Caco-2 (cell line): ENCODE measurements at regions of chr17 and their contacts with region 1.

Region 1: DNA sequence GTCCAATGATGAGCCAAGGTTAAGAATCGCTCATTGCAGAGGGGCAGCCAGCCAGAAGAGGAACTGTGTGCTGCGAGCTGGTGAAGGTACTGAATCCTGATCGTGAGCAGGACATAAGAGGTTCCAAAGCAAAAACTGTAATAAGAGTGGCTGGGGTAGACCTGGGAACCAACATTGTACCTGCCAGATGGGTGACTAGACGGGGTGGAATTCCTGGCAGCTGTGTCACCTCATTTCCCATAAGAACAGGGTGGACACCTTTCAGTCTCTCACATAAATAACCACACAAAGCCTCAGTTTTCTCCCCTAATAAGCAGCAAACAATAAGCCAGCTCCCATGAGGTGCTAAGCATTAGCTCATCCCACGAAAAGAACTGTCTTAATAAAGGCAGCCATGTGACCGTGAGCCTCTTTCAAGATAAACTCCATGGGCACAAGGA is 290.3 kb downstream of the SOX9 start:
- DNase-seq: no peak
- H3K4me3 ChIP-seq: no peak overlapping the region
- H3K4me3 Mint-ChIP-seq: no peak overlapping the region
- H3K27ac Mint-ChIP-seq: peak overlapping the region; percentile 77
- H3K4me1 ChIP-seq: peaks cover 79% of the 10 kb centered on the region
- H3K4me1 Mint-ChIP-seq: peaks cover 50% of the 10 kb centered on the region
- H3K27me3 ChIP-seq: no peaks in the 10 kb centered on the region
- H3K27me3 Mint-ChIP-seq: no peaks in the 10 kb centered on the region
- CTCF ChIP-seq: no peak

Region 2: DNA sequence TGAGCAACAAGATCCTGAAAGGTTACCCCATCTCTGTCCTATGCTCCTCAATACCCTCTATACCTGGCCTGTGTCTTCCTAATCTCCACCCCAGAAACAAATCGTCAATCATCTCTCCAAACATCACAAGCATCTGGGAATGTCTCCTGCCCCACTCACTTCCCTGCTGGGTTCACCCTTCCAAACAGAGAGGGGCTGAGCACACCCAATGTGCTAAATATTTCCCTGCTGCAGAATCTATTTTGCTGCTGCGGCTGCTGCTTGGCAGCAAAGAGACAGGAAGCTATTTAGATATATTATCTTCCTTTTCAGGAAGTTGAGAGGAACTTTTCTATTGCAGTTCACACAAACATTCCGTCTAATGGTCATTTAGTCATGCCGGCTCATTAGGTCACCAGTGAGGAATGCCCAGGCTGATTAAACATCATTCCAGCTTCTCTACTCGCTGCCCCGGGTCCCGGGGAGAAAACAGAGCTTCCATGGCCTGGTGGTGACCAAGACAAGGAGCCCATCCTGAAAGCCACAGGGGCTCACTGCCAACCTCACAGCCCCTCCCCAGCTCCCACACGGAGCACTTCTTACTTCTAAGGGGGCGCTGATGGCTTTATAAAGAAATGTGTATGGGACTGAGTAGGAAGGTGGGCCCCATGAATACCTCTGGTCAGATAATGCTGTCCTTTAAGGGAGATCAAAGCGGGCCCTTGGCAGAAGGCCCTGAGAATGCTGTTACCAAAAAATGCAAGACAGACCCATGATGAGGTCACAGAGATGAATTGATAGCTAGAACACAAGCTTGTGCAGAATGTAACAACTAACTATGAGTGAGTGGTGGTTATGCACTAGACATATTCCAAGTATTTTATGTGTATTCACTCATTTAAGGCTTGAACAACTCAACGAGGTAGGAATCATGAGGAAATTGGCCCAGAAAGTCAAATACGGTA is 72.0 kb before region 1 on chr17:
- CTCF ChIA-PET with region 1: no interaction called
- POLR2A ChIA-PET with region 1: no interaction called
- intact Hi-C with region 1: loop called (anchors 1 kb)
- DNase-seq: peak; percentile 67 to 83
- H3K4me3 ChIP-seq: no peak overlapping the region
- H3K4me3 Mint-ChIP-seq: peak overlapping the region; percentile 25
- H3K27ac Mint-ChIP-seq: peak overlapping the region; percentile 61
- H3K4me1 ChIP-seq: peaks cover 24% of the 10 kb centered on the region
- H3K4me1 Mint-ChIP-seq: peaks cover 25% of the 10 kb centered on the region
- H3K27me3 ChIP-seq: no peaks in the 10 kb centered on the region
- H3K27me3 Mint-ChIP-seq: no peaks in the 10 kb centered on the region
- CTCF ChIP-seq: no peak

Region 3: GRCh38 chr17:72421128-72422092 is 10.3 kb after region 1 on chr17:
- CTCF ChIA-PET with region 1: no interaction called
- POLR2A ChIA-PET with region 1: no interaction called
- intact Hi-C with region 1: loop called (anchors 1 kb)
- DNase-seq: peak; percentile 85 to 92
- H3K4me3 ChIP-seq: no peak overlapping the region
- H3K4me3 Mint-ChIP-seq: peak overlapping the region; percentile 29
- H3K27ac Mint-ChIP-seq: peak overlapping the region; percentile 97
- H3K4me1 ChIP-seq: peaks cover 43% of the 10 kb centered on the region
- H3K4me1 Mint-ChIP-seq: peaks cover 42% of the 10 kb centered on the region
- H3K27me3 ChIP-seq: no peaks in the 10 kb centered on the region
- H3K27me3 Mint-ChIP-seq: no peaks in the 10 kb centered on the region
- CTCF ChIP-seq: no peak

Region 4: GRCh38 chr17:72515291-72516065 is 104.3 kb after region 1 on chr17:
- CTCF ChIA-PET with region 1: no interaction called
- POLR2A ChIA-PET with region 1: no interaction called
- intact Hi-C with region 1: loop called (anchors 1 kb)
- DNase-seq: no peak
- H3K4me3 ChIP-seq: no peak overlapping the region
- H3K4me3 Mint-ChIP-seq: no peak overlapping the region
- H3K27ac Mint-ChIP-seq: no peak overlapping the region
- H3K4me1 ChIP-seq: peaks cover 46% of the 10 kb centered on the region
- H3K4me1 Mint-ChIP-seq: peaks cover 27% of the 10 kb centered on the region
- H3K27me3 ChIP-seq: no peaks in the 10 kb centered on the region
- H3K27me3 Mint-ChIP-seq: no peaks in the 10 kb centered on the region
- CTCF ChIP-seq: no peak